ENCODE measurements at regions of chr17 and their contacts with region 1.

Region 1: DNA sequence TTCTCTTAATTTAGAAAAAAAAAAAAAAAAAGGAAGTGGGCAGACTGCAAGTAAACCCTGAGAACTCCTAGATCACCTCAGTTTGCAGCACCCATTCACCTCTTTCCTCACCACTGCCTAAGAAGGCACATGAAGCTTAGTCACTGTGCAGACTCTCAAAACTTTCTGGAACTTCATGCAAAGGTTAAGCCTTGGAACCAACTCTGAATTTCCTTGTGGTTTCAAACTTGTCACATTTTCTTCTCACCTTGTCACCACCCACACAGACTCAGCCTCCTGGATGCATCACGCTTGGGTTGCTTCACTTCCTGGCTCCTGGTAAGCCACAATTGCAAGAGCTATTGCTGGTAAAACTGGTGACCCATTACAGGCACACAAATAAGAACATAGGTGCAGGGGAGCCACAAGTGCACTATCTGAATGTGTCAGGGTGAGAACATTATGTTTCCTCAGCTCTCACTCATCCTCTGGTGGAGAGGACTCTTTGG is 15.0 kb upstream of the CPD start:
- DNase-seq: peak; percentile 84
- H3K4me3 Mint-ChIP-seq: peak overlapping the region; percentile 44
- H3K27ac Mint-ChIP-seq: peak overlapping the region; percentile 90
- H3K4me1 Mint-ChIP-seq: peaks cover 36% of the 10 kb centered on the region
- H3K27me3 Mint-ChIP-seq: no peaks in the 10 kb centered on the region

Region 2: GRCh38 chr17:30173649-30174048 is 190.1 kb before region 1 on chr17:
- intact Hi-C with region 1: loop called (anchors 5 kb)
- DNase-seq: no peak
- H3K4me3 Mint-ChIP-seq: no peak overlapping the region
- H3K27ac Mint-ChIP-seq: no peak overlapping the region
- H3K4me1 Mint-ChIP-seq: peaks cover 23% of the 10 kb centered on the region
- H3K27me3 Mint-ChIP-seq: no peaks in the 10 kb centered on the region

Region 3: DNA sequence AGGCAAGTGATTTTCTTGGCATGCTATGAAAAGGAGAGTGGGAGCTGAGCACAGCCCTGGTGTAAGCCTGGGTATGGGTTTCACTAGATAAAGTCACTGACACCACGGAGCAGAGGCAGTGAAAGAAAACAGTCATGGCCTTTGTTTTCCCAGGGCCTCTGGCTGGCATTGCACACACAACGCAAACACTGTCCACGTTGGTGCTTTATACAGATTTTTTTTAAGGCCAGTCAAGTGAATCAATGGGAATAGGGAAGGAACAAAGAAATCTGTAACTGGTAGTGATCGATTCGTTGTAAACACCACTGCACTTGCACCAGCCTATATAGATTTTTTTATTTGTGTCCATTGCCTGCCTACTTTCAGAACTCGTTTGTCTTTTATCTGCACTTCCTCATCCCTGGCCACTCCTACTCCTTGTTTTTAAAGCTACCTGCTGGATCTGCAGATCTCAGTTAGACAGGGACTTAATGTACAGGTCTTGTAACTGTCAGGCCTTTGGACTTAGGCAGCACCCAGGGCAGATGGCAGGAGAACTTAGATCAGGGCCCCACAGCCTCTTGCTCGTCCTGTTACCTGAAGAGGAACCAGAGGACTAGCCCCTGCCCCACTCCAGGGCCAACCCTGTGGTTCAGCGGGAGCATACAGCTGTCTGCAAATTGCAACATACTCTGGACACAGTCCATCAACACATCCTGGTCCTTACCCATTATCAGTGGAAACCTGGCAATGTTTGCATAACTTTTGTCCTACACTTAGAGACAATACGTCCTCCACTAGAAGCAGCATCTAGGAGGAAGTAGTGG is 19.3 kb before region 1 on chr17:
- intact Hi-C with region 1: loop called (anchors 1 kb)
- DNase-seq: no peak
- H3K4me3 Mint-ChIP-seq: no peak overlapping the region
- H3K27ac Mint-ChIP-seq: no peak overlapping the region
- H3K4me1 Mint-ChIP-seq: peaks cover 19% of the 10 kb centered on the region
- H3K27me3 Mint-ChIP-seq: peaks cover 7% of the 10 kb centered on the region

Region 4: GRCh38 chr17:30413109-30413508 is 49.4 kb after region 1 on chr17:
- intact Hi-C with region 1: loop called (anchors 1 kb)
- DNase-seq: no peak
- H3K4me3 Mint-ChIP-seq: no peak overlapping the region
- H3K27ac Mint-ChIP-seq: peak overlapping the region; percentile 41
- H3K4me1 Mint-ChIP-seq: peaks cover 34% of the 10 kb centered on the region
- H3K27me3 Mint-ChIP-seq: no peaks in the 10 kb centered on the region